ENCODE measurements at regions of chr5 and their contacts with region 1.

Region 1: GRCh38 chr5:96752341-96753016 is 55.3 kb downstream of the ERAP1 start:
- DNase-seq: no peak
- ATAC-seq: peak; percentile 29

Region 2: GRCh38 chr5:96614110-96614691 is 138.3 kb before region 1 on chr5:
- intact Hi-C with region 1: loop called in 1 of 2 experiments (anchors 5 kb)
- DNase-seq: peak; percentile 40 to 55
- ATAC-seq: peak; percentile 72

Region 3: DNA sequence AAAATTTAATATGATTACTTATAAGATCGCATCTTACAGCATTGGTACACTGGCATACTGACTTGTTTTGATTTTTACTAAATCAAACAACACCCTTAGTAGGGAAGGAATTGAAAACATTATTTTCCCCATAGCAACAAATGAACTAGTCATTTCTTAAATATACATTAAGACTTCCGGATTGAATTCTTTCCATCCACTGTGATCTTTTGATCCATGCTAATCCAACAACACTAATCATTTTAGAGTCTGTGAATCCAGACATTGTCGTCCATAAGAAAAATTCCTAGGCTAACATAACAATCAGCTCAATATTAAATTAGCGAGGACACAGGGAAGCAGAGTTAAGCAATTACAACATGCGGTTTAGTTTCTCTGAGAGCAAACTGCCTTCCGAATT is 76.8 kb after region 1 on chr5:
- intact Hi-C with region 1: no loop called
- DNase-seq: no peak
- ATAC-seq: no peak

Region 4: DNA sequence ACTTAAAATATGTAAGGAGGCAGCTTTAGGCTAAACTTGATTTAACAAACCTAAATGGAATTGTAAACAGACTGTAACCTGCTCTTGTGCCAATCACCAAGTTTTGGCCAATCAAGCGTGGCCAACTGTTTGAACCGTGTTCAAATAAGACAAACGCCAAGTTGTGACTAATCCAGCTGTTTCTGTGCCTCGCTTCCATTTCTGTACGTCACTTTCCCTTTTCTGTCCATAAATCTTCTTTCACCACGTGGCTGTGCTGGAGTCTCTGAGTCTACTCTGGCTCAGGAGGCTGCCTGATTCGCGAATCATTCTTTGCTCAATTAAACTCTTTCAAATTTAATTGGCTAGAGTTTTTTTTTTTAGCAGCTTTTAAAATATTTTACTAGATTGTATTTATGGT is 318.6 kb after region 1 on chr5:
- intact Hi-C with region 1: no loop called
- DNase-seq: peak in 1 of 2 donors; percentile 35
- ATAC-seq: no peak